Activated naive CD4-positive, alpha-beta T cell treated with anti-CD3 and anti-CD28 coated beads for 36 hours (primary cell): ENCODE measurements at regions of chr16 and their contacts with region 1.

Region 1: DNA sequence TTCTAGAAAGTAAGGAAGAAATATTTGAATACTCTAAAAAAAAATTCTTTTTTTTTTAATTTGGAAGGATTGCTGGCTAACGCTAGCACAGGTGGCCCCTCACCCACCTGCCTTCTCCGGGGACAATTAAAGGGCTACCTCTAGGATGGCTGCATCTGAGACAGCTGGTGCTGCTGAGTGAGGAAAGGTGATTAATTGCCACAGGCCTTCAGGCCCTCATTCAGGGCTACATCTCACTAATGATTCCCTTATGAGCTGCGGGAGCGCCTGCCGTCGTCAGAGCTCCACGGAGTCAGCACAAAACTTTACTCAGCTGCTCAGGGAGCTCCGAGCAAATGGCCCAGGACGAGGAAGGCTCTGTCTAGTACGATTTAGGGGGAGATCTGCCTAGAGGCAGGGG is 27.0 kb upstream of the AKTIP start:
- DNase-seq: no peak
- H3K4me3 Mint-ChIP-seq: no peak overlapping the region
- H3K27ac Mint-ChIP-seq: no peak overlapping the region
- H3K4me1 Mint-ChIP-seq: peaks cover 12% of the 10 kb centered on the region
- H3K27me3 Mint-ChIP-seq: no peaks in the 10 kb centered on the region

Region 2: GRCh38 chr16:53291757-53292392 is 238.2 kb before region 1 on chr16:
- CTCF ChIA-PET with region 1: no interaction called
- intact Hi-C with region 1: no loop called
- DNase-seq: no peak
- H3K4me3 Mint-ChIP-seq: no peak overlapping the region
- H3K27ac Mint-ChIP-seq: no peak overlapping the region
- H3K4me1 Mint-ChIP-seq: no peaks in the 10 kb centered on the region
- H3K27me3 Mint-ChIP-seq: no peaks in the 10 kb centered on the region

Region 3: GRCh38 chr16:53457670-53458069 is 72.4 kb before region 1 on chr16:
- CTCF ChIA-PET with region 1: no interaction called
- intact Hi-C with region 1: loop called (anchors 1 kb)
- DNase-seq: peak; percentile 87
- H3K4me3 Mint-ChIP-seq: peak overlapping the region; percentile 57
- H3K27ac Mint-ChIP-seq: peak overlapping the region; percentile 94
- H3K4me1 Mint-ChIP-seq: peaks cover 86% of the 10 kb centered on the region
- H3K27me3 Mint-ChIP-seq: no peaks in the 10 kb centered on the region

Region 4: GRCh38 chr16:53509906-53510703 is 19.9 kb before region 1 on chr16:
- CTCF ChIA-PET with region 1: no interaction called
- intact Hi-C with region 1: no loop called
- DNase-seq: peak; percentile 55
- H3K4me3 Mint-ChIP-seq: peak overlapping the region; percentile 10
- H3K27ac Mint-ChIP-seq: no peak overlapping the region
- H3K4me1 Mint-ChIP-seq: peaks cover 18% of the 10 kb centered on the region
- H3K27me3 Mint-ChIP-seq: no peaks in the 10 kb centered on the region

Region 5: GRCh38 chr16:53549970-53550690 is 20.1 kb after region 1 on chr16:
- CTCF ChIA-PET with region 1: interaction called, 3 read pairs
- intact Hi-C with region 1: loop called (anchors 1 kb)
- DNase-seq: peak; percentile 72
- H3K4me3 Mint-ChIP-seq: no peak overlapping the region
- H3K27ac Mint-ChIP-seq: no peak overlapping the region
- H3K4me1 Mint-ChIP-seq: peaks cover 22% of the 10 kb centered on the region
- H3K27me3 Mint-ChIP-seq: peaks cover 38% of the 10 kb centered on the region

Region 6: DNA sequence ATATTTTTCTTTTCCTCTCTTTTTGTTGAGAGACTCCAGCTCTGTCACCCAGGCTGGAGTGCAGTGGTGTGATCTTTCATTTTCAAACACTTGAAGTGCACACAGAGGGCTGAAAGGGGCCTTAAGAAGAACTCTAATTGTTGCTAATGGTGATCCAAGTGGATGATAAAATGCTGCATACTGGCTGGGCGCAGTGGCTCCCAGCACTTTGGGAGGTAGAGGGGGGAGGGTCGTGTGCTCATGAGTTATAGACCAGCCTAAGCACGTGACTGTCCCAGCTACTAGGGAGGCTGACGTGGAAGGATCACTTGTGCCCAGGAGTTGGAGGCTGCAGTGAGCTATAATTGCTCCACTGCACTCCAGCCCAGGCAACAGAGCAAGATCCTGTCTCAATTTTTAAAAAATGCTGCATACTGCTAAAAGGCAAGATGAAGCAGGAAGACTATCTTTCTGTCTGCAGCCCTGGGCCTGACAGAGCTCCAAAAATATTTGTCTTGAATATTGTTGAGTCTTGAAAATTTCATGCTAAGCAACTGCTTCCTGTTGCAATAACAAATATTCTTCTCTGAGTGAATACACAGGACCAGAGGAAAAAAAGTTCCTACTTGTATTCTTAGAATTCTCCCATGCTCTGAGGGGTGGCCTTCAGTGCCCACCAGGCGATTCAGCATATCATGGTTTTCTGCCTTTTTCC is 36.7 kb after region 1 on chr16:
- CTCF ChIA-PET with region 1: no interaction called
- intact Hi-C with region 1: no loop called
- DNase-seq: no peak
- H3K4me3 Mint-ChIP-seq: no peak overlapping the region
- H3K27ac Mint-ChIP-seq: no peak overlapping the region
- H3K4me1 Mint-ChIP-seq: no peaks in the 10 kb centered on the region
- H3K27me3 Mint-ChIP-seq: peaks cover 6% of the 10 kb centered on the region

Region 7: GRCh38 chr16:53743149-53743566 is 213.1 kb after region 1 on chr16:
- CTCF ChIA-PET with region 1: no interaction called
- intact Hi-C with region 1: loop called (anchors 1 kb)
- DNase-seq: peak; percentile 44
- H3K4me3 Mint-ChIP-seq: no peak overlapping the region
- H3K27ac Mint-ChIP-seq: no peak overlapping the region
- H3K4me1 Mint-ChIP-seq: peaks cover 36% of the 10 kb centered on the region
- H3K27me3 Mint-ChIP-seq: no peaks in the 10 kb centered on the region

Region 8: DNA sequence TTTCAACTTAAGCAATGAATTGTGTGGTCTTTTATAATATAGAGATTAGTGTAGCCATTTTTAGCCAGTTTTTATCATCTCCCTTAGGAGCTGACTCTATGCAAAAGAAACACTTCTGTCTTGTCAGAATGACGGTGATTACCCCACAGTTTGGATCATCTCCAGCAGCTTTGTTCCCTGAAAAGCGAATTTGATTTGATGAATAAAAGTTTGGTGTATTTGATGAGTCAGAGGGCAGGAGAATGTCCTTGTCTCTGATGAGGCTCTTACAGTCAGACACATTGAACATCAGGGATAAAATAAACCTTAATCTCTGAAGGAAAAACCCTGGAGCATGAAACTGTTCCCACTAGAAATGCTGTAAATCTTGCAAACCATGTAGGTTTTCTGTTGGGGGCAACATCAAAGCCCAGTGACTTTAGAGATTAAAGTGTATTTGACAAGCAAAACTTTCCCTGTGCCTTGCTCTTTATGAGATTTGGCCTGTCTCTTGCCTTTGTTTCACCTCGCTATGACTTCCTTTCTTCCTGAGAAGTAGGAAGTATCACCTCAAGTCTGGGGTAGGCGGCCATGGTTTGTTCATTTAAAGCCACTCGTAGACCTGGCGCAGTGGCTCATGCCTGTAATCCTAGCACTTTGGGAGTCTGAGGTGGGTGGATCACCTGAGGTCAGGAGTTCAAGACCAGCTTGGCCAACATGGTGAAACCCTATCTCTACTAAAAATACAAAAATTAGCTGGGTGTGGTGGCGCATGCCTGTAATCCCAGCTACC is 383.2 kb after region 1 on chr16:
- CTCF ChIA-PET with region 1: no interaction called
- intact Hi-C with region 1: loop called (anchors 2 kb)
- DNase-seq: peak; percentile 42
- H3K4me3 Mint-ChIP-seq: peak overlapping the region; percentile 23
- H3K27ac Mint-ChIP-seq: peak overlapping the region; percentile 79
- H3K4me1 Mint-ChIP-seq: peaks cover 8% of the 10 kb centered on the region
- H3K27me3 Mint-ChIP-seq: no peaks in the 10 kb centered on the region